Heart right ventricle (tissue), 16 donors: ENCODE measurements at regions of chr6 and their contacts with region 1.

Region 1: GRCh38 chr6:103273048-103273447 is 1586.7 kb downstream of the HACE1 start:
- DNase-seq: no peak
- ATAC-seq: no peak
- H3K4me3 ChIP-seq: no peak overlapping the region
- H3K27ac ChIP-seq: no peak overlapping the region
- H3K4me1 ChIP-seq: no peaks in the 10 kb centered on the region
- H3K27me3 ChIP-seq: no peaks in the 10 kb centered on the region
- CTCF ChIP-seq: peak in 7 of 9 donors; percentile 26 to 48 (median 42)

Region 2: GRCh38 chr6:102841060-102841459 is 432.0 kb before region 1 on chr6:
- intact Hi-C with region 1: loop called in 2 of 10 experiments (anchors 5 to 10 kb)
- DNase-seq: no peak
- ATAC-seq: no peak
- H3K4me3 ChIP-seq: no peak overlapping the region
- H3K27ac ChIP-seq: no peak overlapping the region
- H3K4me1 ChIP-seq: no peaks in the 10 kb centered on the region
- H3K27me3 ChIP-seq: no peaks in the 10 kb centered on the region
- CTCF ChIP-seq: no peak

Region 3: GRCh38 chr6:102848796-102849195 is 424.3 kb before region 1 on chr6:
- intact Hi-C with region 1: loop called in 2 of 10 experiments (anchors 5 to 10 kb)
- DNase-seq: no peak
- ATAC-seq: no peak
- H3K4me3 ChIP-seq: no peak overlapping the region
- H3K27ac ChIP-seq: no peak overlapping the region
- H3K4me1 ChIP-seq: no peaks in the 10 kb centered on the region
- H3K27me3 ChIP-seq: no peaks in the 10 kb centered on the region
- CTCF ChIP-seq: no peak